ENCODE measurements at regions of chr9 and their contacts with region 1.

Region 1: GRCh38 chr9:69993110-69993509 is 50.5 kb upstream of the MAMDC2 start:
- DNase-seq: no peak
- ATAC-seq: no peak
- H3K4me3 ChIP-seq: no peak overlapping the region
- H3K27ac ChIP-seq: no peak overlapping the region
- H3K4me1 ChIP-seq: peaks cover 3 to 4% of the 10 kb centered on the region in 2 donors
- H3K27me3 ChIP-seq: no peaks in the 10 kb centered on the region
- CTCF ChIP-seq: no peak
- POLR2A ChIP-seq: no peak

Region 2: DNA sequence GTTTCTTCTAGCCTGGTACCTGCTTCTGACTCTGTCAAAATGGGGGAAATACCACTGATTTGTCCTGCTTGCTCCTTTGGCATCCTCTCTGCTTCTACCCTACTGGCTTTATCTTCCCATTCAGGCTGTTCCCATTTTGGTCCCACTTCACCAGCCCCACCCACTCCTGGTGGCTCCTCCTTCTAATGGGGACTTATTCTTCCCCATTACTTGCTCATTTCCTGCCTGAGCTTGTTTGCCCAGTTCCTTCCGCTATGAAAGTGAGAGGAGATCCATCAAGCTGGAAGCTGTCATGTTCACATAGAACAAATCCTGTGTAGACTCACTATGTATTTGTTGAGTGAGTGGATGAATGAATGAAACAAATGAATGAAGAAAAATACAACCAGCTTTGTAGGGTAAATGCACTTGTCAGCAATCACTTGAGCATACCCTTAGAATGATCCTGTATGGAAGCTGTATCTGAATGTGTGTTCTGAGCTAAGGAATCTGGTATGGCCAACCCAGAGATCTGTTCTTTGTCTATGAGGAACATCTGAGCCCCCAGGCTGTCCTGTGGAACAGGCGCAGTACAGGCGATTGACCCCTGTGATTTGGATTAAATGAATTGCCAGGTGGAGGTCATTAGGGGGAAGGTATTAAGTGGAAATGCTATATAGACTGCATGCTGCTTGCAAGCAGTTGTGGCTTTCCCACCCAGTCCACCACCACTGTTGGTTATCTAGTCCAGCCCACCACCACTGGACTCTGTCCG is 410.4 kb before region 1 on chr9:
- in situ Hi-C with region 1: no loop called
- intact Hi-C with region 1: no loop called
- DNase-seq: no peak
- ATAC-seq: no peak
- H3K4me3 ChIP-seq: no peak overlapping the region
- H3K27ac ChIP-seq: no peak overlapping the region
- H3K4me1 ChIP-seq: no peaks in the 10 kb centered on the region
- H3K27me3 ChIP-seq: no peaks in the 10 kb centered on the region
- CTCF ChIP-seq: no peak
- POLR2A ChIP-seq: no peak

Region 3: GRCh38 chr9:69936427-69936826 is 56.7 kb before region 1 on chr9:
- in situ Hi-C with region 1: loop called in 1 of 4 experiments (anchors 5 kb)
- intact Hi-C with region 1: no loop called
- DNase-seq: no peak
- ATAC-seq: no peak
- H3K4me3 ChIP-seq: no peak overlapping the region
- H3K27ac ChIP-seq: no peak overlapping the region
- H3K4me1 ChIP-seq: no peaks in the 10 kb centered on the region
- H3K27me3 ChIP-seq: no peaks in the 10 kb centered on the region
- CTCF ChIP-seq: no peak
- POLR2A ChIP-seq: no peak

Region 4: DNA sequence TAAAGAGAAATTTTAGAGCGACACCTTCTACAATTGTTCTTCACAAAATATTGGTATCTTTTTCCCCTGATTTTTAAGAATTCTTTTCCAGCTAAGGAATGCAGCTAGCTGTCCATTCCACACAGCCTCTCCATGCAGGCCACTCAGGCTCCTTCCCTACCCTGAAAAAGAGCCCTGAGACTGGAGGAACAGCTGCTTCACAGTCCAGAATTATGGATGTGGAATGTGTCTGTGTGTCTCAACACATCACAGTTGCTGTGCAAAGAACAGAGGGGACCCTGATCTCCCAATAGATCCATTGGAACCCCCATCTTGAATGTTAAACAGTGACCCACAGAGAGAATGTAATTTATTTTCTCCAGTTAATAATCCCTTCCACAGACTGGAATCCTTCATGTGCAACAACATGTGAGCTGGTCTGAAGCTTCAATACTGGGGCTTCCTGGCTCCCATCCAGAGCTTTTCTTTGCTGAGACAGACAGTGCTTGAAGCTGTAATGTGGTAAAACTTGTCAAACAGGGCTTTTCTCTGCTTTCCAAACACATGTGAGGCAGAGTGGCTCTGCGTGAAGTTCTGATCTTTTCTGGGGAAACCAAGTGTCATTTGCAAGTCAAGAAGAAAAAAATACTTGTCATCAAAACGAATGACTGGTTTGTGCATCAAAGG is 212.4 kb after region 1 on chr9:
- in situ Hi-C with region 1: no loop called
- intact Hi-C with region 1: no loop called
- DNase-seq: no peak
- ATAC-seq: no peak
- H3K4me3 ChIP-seq: no peak overlapping the region
- H3K27ac ChIP-seq: no peak overlapping the region
- H3K4me1 ChIP-seq: no peaks in the 10 kb centered on the region
- H3K27me3 ChIP-seq: no peaks in the 10 kb centered on the region
- CTCF ChIP-seq: no peak
- POLR2A ChIP-seq: no peak